ENCODE measurements at regions of chr3 and their contacts with region 1.

Region 1: DNA sequence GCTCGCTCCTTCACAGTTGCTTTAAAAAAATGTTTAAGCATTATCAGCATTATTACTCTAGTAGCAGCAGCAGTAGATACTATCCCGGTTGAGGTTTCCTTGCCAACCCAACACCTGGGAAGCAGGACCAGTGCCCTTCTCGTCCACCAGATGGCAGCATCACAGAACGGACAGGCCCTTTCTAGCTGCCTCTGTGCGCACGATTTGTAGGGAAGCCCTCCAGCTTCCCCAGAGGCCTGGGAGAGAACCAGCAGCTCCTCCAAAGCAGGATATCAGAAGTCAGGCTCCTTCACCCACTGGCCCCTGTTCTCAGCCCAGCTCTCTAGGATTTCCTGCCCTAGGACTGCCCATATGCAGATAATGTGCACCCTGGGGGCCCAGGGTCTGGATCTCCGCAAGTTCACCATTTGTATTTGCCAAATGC is 16.8 kb upstream of the ESYT3 start:
- DNase-seq: peak; percentile 86
- H3K4me3 Mint-ChIP-seq: no peak overlapping the region
- H3K27ac Mint-ChIP-seq: no peak overlapping the region
- H3K4me1 Mint-ChIP-seq: peaks cover 4% of the 10 kb centered on the region
- H3K27me3 Mint-ChIP-seq: peaks cover 6% of the 10 kb centered on the region

Region 2: DNA sequence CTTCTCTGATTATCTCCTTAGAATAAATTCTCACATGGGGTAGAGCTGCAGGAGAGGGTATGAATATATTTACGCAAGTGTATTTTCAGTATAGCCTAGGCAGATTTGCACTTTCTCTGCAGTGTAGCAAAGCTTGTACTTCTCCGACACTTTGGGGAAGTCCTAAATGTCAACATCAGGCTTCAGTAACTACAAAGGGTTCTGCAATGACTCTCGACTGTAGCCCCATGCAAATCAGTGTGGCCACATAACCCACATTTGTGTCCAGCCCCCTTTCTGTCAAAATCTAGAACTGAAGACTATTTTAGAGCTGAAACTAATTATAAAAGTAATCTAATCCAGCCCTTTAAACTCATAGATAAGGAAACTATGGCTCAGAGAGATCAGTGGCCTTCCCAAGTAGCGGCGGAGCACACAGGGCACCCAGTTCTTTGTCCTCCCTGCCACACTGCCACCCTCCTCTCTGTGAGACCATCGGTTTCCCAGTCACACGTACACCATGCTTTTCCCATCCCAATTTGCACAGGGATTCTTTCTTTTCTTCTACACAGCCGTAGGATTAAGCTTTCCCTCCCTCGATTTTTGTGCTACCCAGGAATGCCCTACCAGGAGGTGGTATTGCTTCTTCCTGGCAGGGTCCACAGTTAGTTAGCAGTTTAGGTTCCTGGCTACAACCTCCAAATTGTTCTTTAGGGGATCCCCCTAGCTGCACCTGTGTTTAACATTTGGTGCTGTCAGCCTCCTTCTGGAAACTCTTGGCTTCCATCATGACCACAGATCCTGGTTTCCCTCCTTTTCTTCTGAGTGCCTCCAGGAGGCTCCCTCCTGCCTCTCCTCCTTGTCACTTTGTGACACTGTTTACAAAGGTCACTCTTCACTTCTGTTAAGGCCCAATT is 46.3 kb before region 1 on chr3:
- CTCF ChIA-PET with region 1: no interaction called
- intact Hi-C with region 1: no loop called
- DNase-seq: no peak
- H3K4me3 Mint-ChIP-seq: no peak overlapping the region
- H3K27ac Mint-ChIP-seq: no peak overlapping the region
- H3K4me1 Mint-ChIP-seq: no peaks in the 10 kb centered on the region
- H3K27me3 Mint-ChIP-seq: peaks cover 7% of the 10 kb centered on the region

Region 3: GRCh38 chr3:138434276-138434874 is 16.8 kb after region 1 on chr3 and contains the start of gene ESYT3:
- CTCF ChIA-PET with region 1: interaction called, 16 read pairs
- intact Hi-C with region 1: no loop called
- DNase-seq: peak; percentile 82
- H3K4me3 Mint-ChIP-seq: peak within 1 kb of the TSS; percentile 75
- H3K27ac Mint-ChIP-seq: no peak within 1 kb of the TSS
- H3K4me1 Mint-ChIP-seq: peaks cover 11% of the 10 kb centered on the region
- H3K27me3 Mint-ChIP-seq: peaks cover 55% of the 10 kb centered on the region
- total RNA-seq, gene ESYT3: 0.96 to 1.1 TPM

Region 4: DNA sequence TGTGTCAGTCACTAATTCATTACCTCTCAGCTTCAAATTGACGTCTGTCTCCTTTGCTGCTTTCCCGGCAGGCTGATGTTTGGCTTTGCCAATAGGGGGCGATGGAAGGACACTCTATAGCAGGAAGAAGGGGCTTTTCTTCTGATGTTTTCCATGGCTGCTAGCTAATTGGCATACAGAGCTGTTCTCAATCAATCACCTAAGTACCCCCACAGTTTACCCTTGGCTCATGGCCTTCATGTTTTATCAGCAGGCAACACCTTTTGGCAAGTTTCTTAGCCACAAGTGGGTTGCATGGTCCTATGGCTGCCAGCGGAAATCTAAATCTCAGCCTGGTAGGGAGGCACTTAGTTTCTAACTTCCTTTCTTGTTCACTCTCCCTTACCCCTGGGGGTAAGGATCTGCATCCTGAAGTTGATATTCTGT is 61.9 kb after region 1 on chr3:
- CTCF ChIA-PET with region 1: interaction called, 4 read pairs
- intact Hi-C with region 1: loop called (anchors 5 kb)
- DNase-seq: peak; percentile 65
- H3K4me3 Mint-ChIP-seq: no peak overlapping the region
- H3K27ac Mint-ChIP-seq: no peak overlapping the region
- H3K4me1 Mint-ChIP-seq: no peaks in the 10 kb centered on the region
- H3K27me3 Mint-ChIP-seq: no peaks in the 10 kb centered on the region

Region 5: GRCh38 chr3:138694287-138695007 is 276.9 kb after region 1 on chr3:
- CTCF ChIA-PET with region 1: interaction called, 7 read pairs
- intact Hi-C with region 1: loop called (anchors 5 kb)
- DNase-seq: no peak
- H3K4me3 Mint-ChIP-seq: no peak overlapping the region
- H3K27ac Mint-ChIP-seq: no peak overlapping the region
- H3K4me1 Mint-ChIP-seq: peaks cover 3% of the 10 kb centered on the region
- H3K27me3 Mint-ChIP-seq: no peaks in the 10 kb centered on the region

Region 6: GRCh38 chr3:139329345-139329850 is 911.8 kb after region 1 on chr3:
- CTCF ChIA-PET with region 1: interaction called, 3 read pairs
- intact Hi-C with region 1: loop called (anchors 5 kb)
- DNase-seq: peak; percentile 93
- H3K4me3 Mint-ChIP-seq: peak overlapping the region; percentile 46
- H3K27ac Mint-ChIP-seq: no peak overlapping the region
- H3K4me1 Mint-ChIP-seq: peaks cover 15% of the 10 kb centered on the region
- H3K27me3 Mint-ChIP-seq: peaks cover 28% of the 10 kb centered on the region